ENCODE measurements at regions of chr9 and their contacts with region 1.

Region 1: GRCh38 chr9:32378993-32379729 is 5.3 kb upstream of the ACO1 start:
- DNase-seq: no peak
- H3K4me3 ChIP-seq: no peak overlapping the region
- H3K27ac ChIP-seq: no peak overlapping the region
- H3K4me1 ChIP-seq: peaks cover 18% of the 10 kb centered on the region
- H3K27me3 ChIP-seq: peaks cover 13% of the 10 kb centered on the region
- CTCF ChIP-seq: peak; percentile 84

Region 2: DNA sequence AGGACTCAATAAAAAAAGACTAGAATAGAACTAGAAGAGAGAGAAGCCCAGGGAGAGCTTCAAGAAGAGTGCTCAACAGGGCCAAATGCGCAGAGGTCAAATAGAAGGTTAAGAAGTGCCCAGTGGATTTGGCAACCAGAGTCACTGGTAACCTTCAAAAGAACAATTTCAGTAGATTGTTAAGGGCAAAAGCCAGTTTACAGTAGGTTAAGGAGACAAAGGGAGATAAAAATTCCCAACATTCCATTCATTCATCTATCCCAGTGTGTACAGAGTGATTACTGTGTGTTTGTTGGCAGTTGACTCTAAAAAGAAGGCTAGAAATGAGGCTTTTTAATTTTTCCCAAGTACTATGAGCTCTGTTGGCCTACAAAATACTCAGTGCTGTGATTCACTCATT is 77.4 kb after region 1 on chr9:
- intact Hi-C with region 1: no loop called
- DNase-seq: no peak
- H3K4me3 ChIP-seq: no peak overlapping the region
- H3K27ac ChIP-seq: no peak overlapping the region
- H3K4me1 ChIP-seq: peaks cover 7% of the 10 kb centered on the region
- H3K27me3 ChIP-seq: no peaks in the 10 kb centered on the region
- CTCF ChIP-seq: no peak

Region 3: GRCh38 chr9:32516241-32516640 is 137.1 kb after region 1 on chr9:
- intact Hi-C with region 1: no loop called
- DNase-seq: no peak
- H3K4me3 ChIP-seq: no peak overlapping the region
- H3K27ac ChIP-seq: no peak overlapping the region
- H3K4me1 ChIP-seq: no peaks in the 10 kb centered on the region
- H3K27me3 ChIP-seq: no peaks in the 10 kb centered on the region
- CTCF ChIP-seq: no peak

Region 4: GRCh38 chr9:32579706-32580331 is 200.7 kb after region 1 on chr9:
- intact Hi-C with region 1: loop called (anchors 2 kb)
- DNase-seq: peak; percentile 61
- H3K4me3 ChIP-seq: no peak overlapping the region
- H3K27ac ChIP-seq: no peak overlapping the region
- H3K4me1 ChIP-seq: peaks cover 6% of the 10 kb centered on the region
- H3K27me3 ChIP-seq: peaks cover 29% of the 10 kb centered on the region
- CTCF ChIP-seq: peak; percentile 94

Region 5: GRCh38 chr9:32968101-32969011 is 589.2 kb after region 1 on chr9:
- intact Hi-C with region 1: loop called (anchors 10 kb)
- DNase-seq: no peak
- H3K4me3 ChIP-seq: no peak overlapping the region
- H3K27ac ChIP-seq: no peak overlapping the region
- H3K4me1 ChIP-seq: no peaks in the 10 kb centered on the region
- H3K27me3 ChIP-seq: no peaks in the 10 kb centered on the region
- CTCF ChIP-seq: peak; percentile 85